ENCODE measurements at regions of chr22 and their contacts with region 1.

Region 1: DNA sequence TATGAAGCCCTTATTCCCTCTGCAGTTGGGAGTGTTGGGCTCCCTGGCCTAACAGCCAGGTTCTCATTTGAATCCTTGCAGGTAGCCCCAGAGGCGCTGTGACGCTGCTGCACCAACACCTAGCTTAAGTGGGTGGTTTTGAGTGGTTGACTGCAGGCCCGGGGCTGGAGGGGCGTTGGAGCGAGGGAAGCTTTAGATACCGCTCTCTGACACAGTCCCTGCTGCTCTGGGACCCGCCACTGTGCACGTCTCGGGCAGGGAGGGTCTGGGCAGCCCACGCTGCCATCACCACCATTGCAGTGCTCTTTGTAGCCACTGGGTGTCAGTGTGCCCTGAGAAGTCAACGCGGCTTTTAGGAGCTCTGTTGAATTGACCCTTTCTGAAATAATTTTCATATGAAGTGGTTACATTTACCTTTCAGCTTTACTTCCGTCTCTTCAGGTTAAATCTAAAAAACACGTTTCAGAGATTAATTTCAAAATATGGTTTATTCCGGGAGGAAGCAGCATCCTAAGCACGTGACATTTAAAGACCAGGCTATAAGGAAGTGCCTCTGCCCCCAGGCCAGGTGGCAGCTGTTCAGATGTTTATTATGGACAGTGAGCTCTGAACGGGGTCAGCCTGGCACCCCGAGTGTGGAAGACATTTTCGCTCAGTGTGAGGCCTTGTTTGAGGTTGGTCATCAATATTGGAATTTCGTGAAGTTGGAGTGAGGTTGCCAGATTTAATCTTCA is 30.9 kb upstream of the PARVB start:
- DNase-seq: no peak

Region 2: GRCh38 chr22:44020981-44021380 is 27.8 kb after region 1 on chr22:
- intact Hi-C with region 1: no loop called
- DNase-seq: no peak

Region 3: DNA sequence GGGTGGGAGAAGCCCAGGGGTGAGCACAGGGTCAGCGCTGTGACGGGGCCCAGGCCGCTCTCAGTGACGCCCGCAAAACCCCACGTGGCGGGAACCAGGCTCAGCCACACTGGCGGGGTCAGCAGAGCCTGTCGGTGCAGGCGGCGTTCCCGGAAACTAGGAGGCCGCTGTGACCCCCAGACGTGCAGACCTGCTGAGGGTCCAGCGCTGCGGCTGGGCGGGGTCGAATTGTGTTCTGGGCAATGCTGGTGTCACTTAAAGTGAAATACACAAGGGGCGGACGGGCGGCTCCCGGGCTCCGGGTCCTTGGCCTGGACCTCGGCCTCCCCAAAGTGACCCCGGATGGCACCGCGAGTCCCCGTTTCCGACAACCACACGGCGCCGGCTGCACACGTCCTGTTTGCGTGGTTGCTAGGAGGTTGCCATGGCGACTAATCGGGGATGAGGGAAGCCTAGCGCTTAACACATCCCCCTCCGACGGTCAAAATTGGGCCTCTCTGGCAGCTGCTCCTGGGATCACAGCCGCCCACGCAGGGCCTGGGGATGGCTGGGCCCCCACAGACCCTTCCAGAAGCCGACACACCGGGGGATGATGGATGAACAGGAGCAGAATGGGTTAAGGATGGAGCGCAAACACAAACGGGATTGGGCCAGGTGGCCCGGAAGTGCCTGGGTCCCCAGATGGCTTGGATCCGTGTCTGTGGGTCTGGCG is 627.1 kb after region 1 on chr22:
- intact Hi-C with region 1: loop called in 1 of 2 experiments (anchors 5 kb)
- DNase-seq: peak; percentile 93

Region 4: GRCh38 chr22:44625981-44626687 is 632.9 kb after region 1 on chr22:
- intact Hi-C with region 1: loop called (anchors 2 to 5 kb)
- DNase-seq: peak; percentile 89

Measured in posterior vena cava (tissue), 2 donors.